Endothelial cell of umbilical vein (primary cell): ENCODE measurements at regions of chr19 and their contacts with region 1.

Region 1: GRCh38 chr19:29610563-29611271 is 4.6 kb downstream of the POP4 start:
- DNase-seq: peak; percentile 64
- H3K4me3 ChIP-seq: no peak overlapping the region
- H3K27ac ChIP-seq: no peak overlapping the region
- H3K4me1 ChIP-seq: peaks cover 5% of the 10 kb centered on the region
- H3K27me3 ChIP-seq: no peaks in the 10 kb centered on the region
- CTCF ChIP-seq: peak; percentile 79 to 94
- POLR2A ChIP-seq: no peak

Region 2: DNA sequence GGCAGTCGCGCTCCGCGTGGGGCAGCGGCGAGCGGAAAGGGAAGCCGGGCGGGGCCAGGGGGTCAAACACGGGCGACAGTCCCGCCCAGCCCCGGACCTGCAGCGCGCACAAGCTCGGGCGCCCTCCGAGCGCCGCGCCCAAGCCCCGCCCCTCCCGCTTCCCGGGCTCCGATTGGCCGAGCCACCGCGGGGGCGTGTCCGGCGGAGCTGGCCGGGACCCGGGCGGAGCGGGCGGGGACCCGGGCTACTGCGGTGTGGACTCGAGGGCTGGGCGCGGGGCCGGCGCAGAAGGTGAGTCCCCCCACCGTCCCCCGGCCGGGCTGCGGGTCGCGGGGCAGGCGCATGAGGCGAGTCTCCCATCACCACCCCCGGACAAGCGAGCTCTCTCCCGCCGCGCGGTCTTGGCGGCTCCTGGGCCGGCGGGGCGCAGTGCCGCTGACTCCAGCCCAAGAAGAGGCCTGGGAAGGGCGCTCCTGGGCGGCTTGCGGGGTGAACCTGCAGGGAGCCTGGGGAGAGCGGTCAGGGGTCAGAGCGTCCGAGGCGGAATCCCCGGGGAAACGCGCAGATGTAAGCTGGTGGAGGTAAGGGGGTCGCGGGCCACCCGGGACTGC is 54.6 kb after region 1 on chr19 and contains the start of gene PLEKHF1:
- CTCF ChIA-PET with region 1: interaction called, 66 read pairs
- POLR2A ChIA-PET with region 1: interaction called, 14 read pairs
- dilution Hi-C with region 1: no loop called
- intact Hi-C with region 1: loop called (anchors 1 kb)
- DNase-seq: peak; percentile 83
- H3K4me3 ChIP-seq: peak within 1 kb of the TSS; percentile 55 to 81 (median 64)
- H3K27ac ChIP-seq: no peak within 1 kb of the TSS
- H3K4me1 ChIP-seq: peaks cover 29% of the 10 kb centered on the region
- H3K27me3 ChIP-seq: no peaks in the 10 kb centered on the region
- CTCF ChIP-seq: no peak
- POLR2A ChIP-seq: peak; percentile 37
- total RNA-seq, gene PLEKHF1: 4.0 and 5.5 TPM in 2 replicates

Region 3: DNA sequence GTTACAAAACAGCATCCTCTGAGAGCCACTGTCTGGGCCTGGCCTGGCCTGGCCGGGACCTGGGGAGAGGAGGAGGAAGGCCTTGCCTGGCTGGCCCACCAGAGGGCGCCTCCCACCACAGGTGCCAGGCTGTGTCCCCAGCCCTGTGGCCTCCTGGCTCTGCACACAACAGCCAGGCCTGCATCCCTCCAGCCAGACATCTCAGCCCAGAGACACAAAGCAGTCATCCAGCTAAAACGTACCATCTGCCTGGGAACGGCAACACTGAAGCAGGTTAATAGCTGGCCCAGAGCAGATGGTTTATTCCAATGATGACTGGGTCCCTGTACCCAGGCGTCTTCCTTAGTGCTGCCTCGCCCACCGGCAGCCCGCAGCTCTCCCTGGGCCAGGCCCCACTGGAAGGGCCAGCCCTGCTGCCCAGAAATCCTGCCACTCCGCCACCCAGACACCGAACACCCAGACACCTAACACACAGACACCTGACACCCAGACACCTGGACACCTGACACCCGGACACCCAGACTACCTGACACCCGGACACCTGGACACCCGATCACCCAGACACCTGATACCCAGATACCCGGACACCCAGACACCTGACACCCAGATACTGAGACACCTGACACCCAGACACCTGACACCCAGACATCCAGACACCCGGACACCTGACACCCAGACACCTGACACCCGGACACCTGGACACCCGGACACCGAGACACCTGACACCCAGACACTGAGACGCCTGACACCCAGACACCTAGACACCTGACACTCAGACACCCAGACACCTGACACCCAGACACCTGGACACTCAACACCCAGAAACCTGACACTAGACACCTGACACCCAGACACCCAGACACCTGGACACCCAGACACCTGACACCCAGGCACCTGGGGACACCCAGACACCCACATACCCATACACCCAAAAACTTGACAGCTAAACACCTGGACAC is 84.2 kb after region 1 on chr19:
- CTCF ChIA-PET with region 1: interaction called, 30 read pairs
- POLR2A ChIA-PET with region 1: no interaction called
- dilution Hi-C with region 1: no loop called
- intact Hi-C with region 1: loop called (anchors 1 kb)
- DNase-seq: peak; percentile 51
- H3K4me3 ChIP-seq: no peak overlapping the region
- H3K27ac ChIP-seq: no peak overlapping the region
- H3K4me1 ChIP-seq: no peaks in the 10 kb centered on the region
- H3K27me3 ChIP-seq: no peaks in the 10 kb centered on the region
- CTCF ChIP-seq: peak; percentile 76 to 96
- POLR2A ChIP-seq: no peak

Region 4: GRCh38 chr19:29811125-29812079 is 200.7 kb after region 1 on chr19 and contains the start of gene CCNE1:
- CTCF ChIA-PET with region 1: no interaction called
- POLR2A ChIA-PET with region 1: no interaction called
- dilution Hi-C with region 1: no loop called
- intact Hi-C with region 1: loop called (anchors 2 kb)
- DNase-seq: peak; percentile 82
- H3K4me3 ChIP-seq: peak within 1 kb of the TSS; percentile 4 to 49 (median 26)
- H3K27ac ChIP-seq: no peak within 1 kb of the TSS
- H3K4me1 ChIP-seq: no peaks in the 10 kb centered on the region
- H3K27me3 ChIP-seq: no peaks in the 10 kb centered on the region
- CTCF ChIP-seq: no peak
- POLR2A ChIP-seq: no peak
- total RNA-seq, gene CCNE1: 10.1 and 11.8 TPM in 2 replicates

Region 5: GRCh38 chr19:29873024-29873800 is 262.5 kb after region 1 on chr19:
- CTCF ChIA-PET with region 1: interaction called, 3 read pairs
- POLR2A ChIA-PET with region 1: no interaction called
- dilution Hi-C with region 1: no loop called
- intact Hi-C with region 1: loop called (anchors 1 kb)
- DNase-seq: no peak
- H3K4me3 ChIP-seq: peak overlapping the region in 1 of 3 experiments; percentile 23
- H3K27ac ChIP-seq: no peak overlapping the region
- H3K4me1 ChIP-seq: peaks cover 4% of the 10 kb centered on the region
- H3K27me3 ChIP-seq: no peaks in the 10 kb centered on the region
- CTCF ChIP-seq: peak; percentile 70 to 77
- POLR2A ChIP-seq: no peak